Activated T-helper 1 cell treated with anti-CD3 and anti-CD28 coated beads, Interleukin-12 subunit alpha, Interleukin-12 subunit beta, Interleukin-2, Interleukin-4 antibody, amounts not matched to agents 30 ng/mL and 10 ng/mL and 1 ng/mL, durations not matched to agents 14 hours and 24 hours and 36 hours (primary cell): ENCODE measurements at regions of chr2 and their contacts with region 1.

Region 1: GRCh38 chr2:26577434-26578112 is 63.6 kb downstream of the CIB4 start:
- DNase-seq: peak; percentile 44
- H3K4me3 Mint-ChIP-seq: no peak overlapping the region
- H3K27ac Mint-ChIP-seq: no peak overlapping the region
- H3K4me1 Mint-ChIP-seq: no peaks in the 10 kb centered on the region
- H3K27me3 Mint-ChIP-seq: peaks cover 8% of the 10 kb centered on the region

Region 2: DNA sequence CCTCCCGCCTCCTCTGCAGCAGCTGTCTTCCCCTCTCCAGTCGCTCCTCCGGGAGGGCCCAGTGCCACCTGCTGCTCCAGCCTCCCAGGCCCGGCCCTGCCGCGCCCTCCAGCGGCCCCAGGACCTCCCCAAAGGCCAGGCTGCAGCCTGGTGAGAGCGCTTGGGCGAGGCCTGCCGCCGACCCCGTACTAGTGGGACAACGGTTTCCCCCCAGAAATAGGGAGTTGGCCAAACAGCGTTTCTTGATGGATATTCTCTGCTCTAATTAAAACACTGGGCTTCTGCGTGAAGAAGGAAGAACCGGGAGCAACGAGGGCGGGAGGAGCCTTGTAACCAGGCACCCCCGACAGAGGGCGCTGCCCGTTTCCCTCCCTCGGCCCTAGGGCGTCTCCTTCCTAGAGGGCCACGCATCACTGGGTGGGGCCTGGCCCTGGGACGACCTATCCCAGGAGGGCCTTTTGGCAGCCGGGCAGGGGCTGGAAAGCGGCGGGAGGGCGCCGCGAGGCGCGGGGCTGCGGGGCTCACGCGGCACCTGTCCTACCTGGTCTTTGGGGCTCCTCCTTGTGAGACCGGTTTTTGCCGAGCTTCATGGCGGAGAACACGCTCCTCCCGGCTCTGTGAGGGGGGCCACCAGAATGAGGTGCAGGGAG is 74.2 kb before region 1 on chr2:
- intact Hi-C with region 1: loop called (anchors 1 kb)
- DNase-seq: peak; percentile 83
- H3K4me3 Mint-ChIP-seq: peak overlapping the region; percentile 79
- H3K27ac Mint-ChIP-seq: peak overlapping the region; percentile 51
- H3K4me1 Mint-ChIP-seq: peaks cover 7% of the 10 kb centered on the region
- H3K27me3 Mint-ChIP-seq: peaks cover 5% of the 10 kb centered on the region